AG04449 (cell line): ENCODE measurements at regions of chr5 and their contacts with region 1.

Region 1: GRCh38 chr5:168268949-168269943 is 22.2 kb upstream of the WWC1 start:
- DNase-seq: no peak
- H3K4me3 ChIP-seq: peak overlapping the region; percentile 54
- CTCF ChIP-seq: peak; percentile 92

Region 2: GRCh38 chr5:168282120-168282519 is 12.9 kb after region 1 on chr5:
- CTCF ChIA-PET with region 1: interaction called, 41 read pairs
- POLR2A ChIA-PET with region 1: no interaction called
- DNase-seq: peak; percentile 38
- H3K4me3 ChIP-seq: no peak overlapping the region
- CTCF ChIP-seq: no peak

Region 3: GRCh38 chr5:168409580-168410458 is 140.6 kb after region 1 on chr5:
- CTCF ChIA-PET with region 1: interaction called, 12 read pairs
- POLR2A ChIA-PET with region 1: no interaction called
- DNase-seq: no peak
- H3K4me3 ChIP-seq: no peak overlapping the region
- CTCF ChIP-seq: no peak